ENCODE measurements at regions of chr10 and their contacts with region 1.

Region 1: DNA sequence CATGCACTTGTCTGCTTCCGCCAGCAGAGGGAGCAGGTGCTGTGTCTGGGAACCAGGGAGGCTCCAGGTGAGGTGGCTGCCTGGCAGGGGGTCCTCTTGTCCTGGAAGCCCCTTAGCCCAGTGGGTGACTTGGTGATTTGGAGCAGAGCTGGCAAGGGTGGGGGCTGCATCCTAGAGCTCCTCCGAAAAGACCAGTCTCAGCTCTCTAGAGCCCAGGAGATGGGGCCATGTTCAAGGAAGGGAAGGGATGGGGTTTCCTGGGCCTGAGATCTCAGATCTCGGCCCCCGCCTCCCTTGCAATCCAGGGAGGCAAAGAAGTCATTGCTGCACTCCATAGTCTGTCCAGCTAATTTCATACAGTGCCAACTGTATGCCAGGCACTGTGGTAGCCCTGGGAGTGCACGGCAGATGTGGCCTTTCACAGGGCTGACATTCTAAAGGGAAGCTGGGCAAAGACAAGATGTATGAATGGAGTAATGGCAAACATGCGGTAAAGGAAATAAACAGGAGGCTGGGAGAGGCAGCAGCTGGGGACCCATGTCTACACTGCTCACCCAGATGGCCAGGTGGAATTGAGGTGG is 20.4 kb upstream of the SFRP5 start:
- ATAC-seq: peak in 7 of 8 experiments; percentile 74 to 93 (median 89)
- H3K4me3 ChIP-seq: no peak overlapping the region
- H3K27ac ChIP-seq: no peak overlapping the region
- H3K4me1 ChIP-seq: peaks cover 0 to 2% of the 10 kb centered on the region in 2 donors

Region 2: DNA sequence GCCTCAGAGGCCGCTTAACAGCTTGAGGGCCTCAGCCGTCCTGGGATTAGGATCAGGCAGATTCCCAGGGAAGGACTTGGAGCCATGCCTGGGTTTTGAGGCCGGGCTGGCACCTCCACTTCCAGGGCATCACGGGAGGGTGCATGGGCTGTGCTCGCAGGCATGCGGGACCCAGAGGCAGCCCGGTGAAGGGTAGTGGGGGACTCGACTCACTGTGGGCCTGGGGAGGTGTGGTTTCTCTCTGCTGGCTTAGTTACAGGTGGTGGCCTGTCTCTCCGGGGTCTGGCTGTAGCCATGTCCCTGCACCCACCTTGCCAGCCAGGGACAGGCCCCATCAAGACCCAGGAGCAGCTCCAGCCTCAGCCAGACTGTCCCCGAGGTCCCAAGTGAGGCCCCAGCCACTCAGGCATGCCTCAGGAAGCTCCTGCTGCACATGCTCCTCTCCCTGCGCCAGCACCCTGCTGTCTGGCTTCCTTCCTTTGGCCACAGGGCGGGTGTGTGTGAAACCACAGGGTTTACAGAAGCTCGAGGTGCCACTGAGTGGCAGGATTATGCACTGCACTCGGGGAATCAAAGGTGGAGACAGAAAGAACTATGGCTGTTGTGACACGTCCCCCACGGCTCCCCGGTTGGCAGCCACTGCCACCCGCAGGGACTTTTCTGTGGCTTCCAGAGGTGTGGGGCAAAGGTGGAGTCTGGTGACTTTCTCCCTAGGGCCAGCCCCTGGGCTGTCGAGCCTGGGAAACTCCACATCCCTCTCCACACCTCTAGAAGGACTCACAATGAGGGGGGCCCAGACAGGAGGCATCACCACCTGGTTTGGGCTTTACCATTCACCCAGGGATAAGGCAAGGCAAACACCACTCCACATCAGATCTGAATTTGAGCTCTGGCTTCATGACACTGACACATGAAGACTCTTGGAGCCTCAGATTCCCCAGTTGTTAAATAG is 77.1 kb after region 1 on chr10:
- in situ Hi-C with region 1: loop called in 1 of 9 experiments (anchors 10 kb)
- ATAC-seq: peak; percentile 89 to 99 (median 99)
- H3K4me3 ChIP-seq: no peak overlapping the region
- H3K27ac ChIP-seq: no peak overlapping the region
- H3K4me1 ChIP-seq: peaks cover 0 to 10% of the 10 kb centered on the region in 2 donors

Region 3: DNA sequence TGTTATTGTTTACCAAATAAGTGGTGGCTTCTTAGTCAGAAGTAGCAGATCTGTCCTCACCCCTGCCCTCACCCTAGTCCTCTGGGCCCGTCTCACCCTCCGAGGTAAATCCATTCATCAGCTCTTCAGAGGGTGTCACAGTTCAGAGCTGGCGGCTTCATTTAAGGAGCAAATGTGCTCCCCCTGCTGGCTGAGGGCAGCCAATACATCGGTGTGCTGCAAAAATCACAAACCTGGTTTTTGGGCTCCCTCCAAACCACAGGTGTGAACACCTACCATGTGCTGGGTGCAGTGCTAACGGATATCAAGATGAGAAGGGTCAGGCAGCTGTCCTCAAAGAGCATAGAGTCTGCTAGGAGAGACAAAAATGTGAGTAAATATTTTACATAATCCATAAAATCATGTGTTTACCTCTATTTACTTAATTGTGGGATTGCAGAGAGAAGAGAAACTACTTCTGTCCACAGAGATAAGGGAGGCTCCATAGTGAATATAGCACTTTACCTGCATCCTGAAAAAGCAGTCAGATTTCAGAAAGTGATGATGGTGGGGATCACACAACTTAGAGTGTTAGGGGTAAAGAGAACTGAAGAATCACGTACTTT is 253.7 kb after region 1 on chr10:
- in situ Hi-C with region 1: loop called in 6 of 9 experiments (anchors 25 kb)
- ATAC-seq: peak; percentile 66 to 79 (median 77)
- H3K4me3 ChIP-seq: no peak overlapping the region
- H3K27ac ChIP-seq: no peak overlapping the region
- H3K4me1 ChIP-seq: peaks cover 7% of the 10 kb centered on the region in 2 donors